ENCODE measurements at regions of chr3 and their contacts with region 1.

Region 1: DNA sequence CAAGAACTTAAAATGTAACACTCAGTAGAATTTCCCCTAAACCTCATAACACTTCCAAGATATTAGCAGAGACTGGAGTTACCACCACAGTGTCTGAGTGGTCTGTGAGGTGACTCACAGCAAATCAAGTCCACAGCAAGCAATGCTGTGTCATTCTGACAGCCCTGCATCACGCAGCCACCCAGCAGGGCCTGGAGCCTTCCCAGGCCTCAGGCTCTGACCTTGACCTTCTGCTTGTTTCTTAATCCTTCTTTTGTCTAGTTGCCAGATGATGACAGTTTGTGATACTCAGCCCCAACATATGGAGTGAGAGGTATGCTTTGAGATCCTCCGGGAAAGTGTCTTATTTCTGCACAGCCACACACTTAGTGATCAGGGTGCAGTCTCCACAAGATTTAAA is 82.5 kb downstream of the TOP2B start:
- DNase-seq: no peak
- ATAC-seq: peak in 1 of 8 donors; percentile 43
- H3K4me3 ChIP-seq: no peak overlapping the region
- H3K27ac ChIP-seq: no peak overlapping the region
- H3K4me1 ChIP-seq: peaks cover 0 to 17% (median 5%) of the 10 kb centered on the region in 9 donors
- H3K27me3 ChIP-seq: no peaks in the 10 kb centered on the region
- CTCF ChIP-seq: no peak

Region 2: DNA sequence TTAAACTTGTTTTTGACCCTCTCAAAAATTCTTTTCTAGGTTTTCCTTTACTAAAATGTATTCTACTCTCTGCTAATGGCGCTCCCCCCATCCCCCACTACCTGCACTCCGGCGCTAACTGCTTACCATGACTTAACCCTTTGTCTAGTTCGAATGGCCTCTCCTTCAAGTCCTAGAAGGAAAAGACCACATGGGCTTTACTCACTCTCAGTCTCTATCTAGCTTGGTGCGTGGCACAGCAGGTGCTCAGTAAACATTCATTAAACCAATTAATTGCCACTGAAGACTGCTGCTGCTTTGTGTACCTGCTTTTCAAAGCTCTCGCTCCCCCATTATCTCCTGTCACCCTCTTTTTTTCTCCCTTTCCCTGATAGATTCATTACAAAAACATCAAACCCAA is 629.9 kb before region 1 on chr3:
- intact Hi-C with region 1: loop called in 1 of 10 experiments (anchors 10 kb)
- DNase-seq: no peak
- ATAC-seq: no peak
- H3K4me3 ChIP-seq: no peak overlapping the region
- H3K27ac ChIP-seq: no peak overlapping the region
- H3K4me1 ChIP-seq: peaks cover 0 to 9% (median 4%) of the 10 kb centered on the region in 9 donors
- H3K27me3 ChIP-seq: peaks cover 0 to 3% (median 0%) of the 10 kb centered on the region in 7 donors
- CTCF ChIP-seq: no peak

Region 3: DNA sequence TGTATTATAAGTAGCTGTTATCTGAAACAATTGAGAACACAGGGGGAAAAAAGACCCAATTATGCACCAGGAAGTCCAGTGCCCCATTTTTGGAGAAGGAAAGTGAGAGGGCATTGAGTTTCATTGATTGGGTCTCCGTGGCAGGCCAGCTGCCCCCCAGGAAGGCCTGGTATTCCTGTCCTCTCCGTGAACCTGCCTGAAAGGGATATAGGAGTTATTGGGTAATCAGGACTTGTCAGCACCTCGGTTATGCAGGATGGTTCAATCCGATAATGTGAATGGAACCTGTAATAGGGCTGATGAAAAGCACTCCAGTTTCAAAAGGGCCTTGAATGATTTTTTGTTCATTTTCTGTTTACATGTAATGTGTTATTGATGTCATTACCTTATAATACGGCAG is 276.2 kb before region 1 on chr3:
- intact Hi-C with region 1: loop called in 1 of 10 experiments (anchors 10 kb)
- DNase-seq: no peak
- ATAC-seq: no peak
- H3K4me3 ChIP-seq: no peak overlapping the region
- H3K27ac ChIP-seq: no peak overlapping the region
- H3K4me1 ChIP-seq: no peaks in the 10 kb centered on the region
- H3K27me3 ChIP-seq: no peaks in the 10 kb centered on the region
- CTCF ChIP-seq: no peak

Region 4: GRCh38 chr3:25372167-25372566 is 210.1 kb before region 1 on chr3:
- intact Hi-C with region 1: no loop called
- DNase-seq: no peak
- ATAC-seq: no peak
- H3K4me3 ChIP-seq: no peak overlapping the region
- H3K27ac ChIP-seq: no peak overlapping the region
- H3K4me1 ChIP-seq: no peaks in the 10 kb centered on the region
- H3K27me3 ChIP-seq: no peaks in the 10 kb centered on the region
- CTCF ChIP-seq: no peak

Measured in heart right ventricle (tissue), 16 donors.